GM18951 (cell line): ENCODE measurements at regions of chr10 and their contacts with region 1.

Region 1: DNA sequence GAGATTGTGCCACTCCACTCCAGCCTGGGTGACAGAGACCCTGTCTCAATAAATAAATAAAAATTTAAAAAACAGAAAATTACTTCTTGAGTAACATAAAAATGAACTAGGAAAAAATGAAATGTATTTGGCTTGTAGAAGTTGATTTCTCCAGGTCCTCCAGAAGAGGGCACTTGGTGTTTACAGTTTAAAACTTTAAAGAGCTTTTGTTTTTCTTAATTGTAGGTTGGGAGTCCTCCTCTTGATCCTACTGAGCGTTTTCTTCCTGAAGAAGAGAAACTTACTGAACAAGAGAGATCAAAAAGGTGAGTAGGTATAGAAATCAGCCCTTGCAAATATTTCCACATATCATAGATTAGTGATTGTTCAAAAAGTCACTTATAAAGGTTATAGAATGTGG is 16.2 kb downstream of the KIFBP start:
- POLR2A ChIP-seq: no peak

Region 2: DNA sequence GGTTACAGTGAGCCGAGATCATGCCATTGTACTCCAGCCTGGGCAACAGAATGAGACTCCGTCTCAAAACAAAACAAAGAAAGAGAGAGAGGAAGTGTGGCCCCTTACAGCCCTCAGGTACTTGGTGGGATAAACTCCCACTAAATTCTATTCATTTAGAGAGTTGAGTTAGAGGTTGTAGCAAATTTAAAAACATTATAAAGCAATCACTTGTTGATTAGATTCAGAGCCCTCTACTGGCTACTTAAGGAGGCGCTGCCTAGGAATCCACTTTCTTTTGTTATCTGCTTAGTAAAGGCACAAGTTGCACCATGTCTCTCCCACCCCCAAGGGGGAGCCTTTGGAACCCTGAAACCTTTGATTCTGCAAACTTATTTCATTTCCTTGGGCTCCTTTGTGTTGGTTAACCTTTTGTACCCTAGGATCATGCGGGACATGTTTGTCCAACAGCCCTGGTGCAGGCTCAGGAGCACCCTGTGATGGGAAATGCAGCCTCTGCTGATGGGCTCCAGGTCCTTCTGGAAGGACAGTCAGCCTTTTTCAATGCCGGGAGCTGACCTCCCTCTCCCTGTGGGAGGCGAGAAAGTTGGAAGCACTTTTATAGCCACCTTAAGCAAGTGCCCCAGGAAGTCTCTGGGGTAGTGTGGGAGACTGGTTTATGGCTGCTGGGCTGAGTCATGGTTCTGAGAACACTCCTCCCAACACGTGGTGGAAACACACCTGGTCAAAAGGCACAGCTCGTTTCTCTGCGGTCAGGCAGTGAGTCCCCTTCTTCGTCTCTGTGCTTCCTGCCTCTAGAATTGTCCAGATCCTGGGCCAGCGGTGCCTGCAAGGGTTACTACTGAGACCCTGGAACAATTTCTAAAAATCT is 217.6 kb after region 1 on chr10:
- in situ Hi-C with region 1: loop called (anchors 25 kb)
- POLR2A ChIP-seq: peak; percentile 51